CD4-positive, alpha-beta memory T cell (primary cell): ENCODE measurements at regions of chr15 and their contacts with region 1.

Region 1: DNA sequence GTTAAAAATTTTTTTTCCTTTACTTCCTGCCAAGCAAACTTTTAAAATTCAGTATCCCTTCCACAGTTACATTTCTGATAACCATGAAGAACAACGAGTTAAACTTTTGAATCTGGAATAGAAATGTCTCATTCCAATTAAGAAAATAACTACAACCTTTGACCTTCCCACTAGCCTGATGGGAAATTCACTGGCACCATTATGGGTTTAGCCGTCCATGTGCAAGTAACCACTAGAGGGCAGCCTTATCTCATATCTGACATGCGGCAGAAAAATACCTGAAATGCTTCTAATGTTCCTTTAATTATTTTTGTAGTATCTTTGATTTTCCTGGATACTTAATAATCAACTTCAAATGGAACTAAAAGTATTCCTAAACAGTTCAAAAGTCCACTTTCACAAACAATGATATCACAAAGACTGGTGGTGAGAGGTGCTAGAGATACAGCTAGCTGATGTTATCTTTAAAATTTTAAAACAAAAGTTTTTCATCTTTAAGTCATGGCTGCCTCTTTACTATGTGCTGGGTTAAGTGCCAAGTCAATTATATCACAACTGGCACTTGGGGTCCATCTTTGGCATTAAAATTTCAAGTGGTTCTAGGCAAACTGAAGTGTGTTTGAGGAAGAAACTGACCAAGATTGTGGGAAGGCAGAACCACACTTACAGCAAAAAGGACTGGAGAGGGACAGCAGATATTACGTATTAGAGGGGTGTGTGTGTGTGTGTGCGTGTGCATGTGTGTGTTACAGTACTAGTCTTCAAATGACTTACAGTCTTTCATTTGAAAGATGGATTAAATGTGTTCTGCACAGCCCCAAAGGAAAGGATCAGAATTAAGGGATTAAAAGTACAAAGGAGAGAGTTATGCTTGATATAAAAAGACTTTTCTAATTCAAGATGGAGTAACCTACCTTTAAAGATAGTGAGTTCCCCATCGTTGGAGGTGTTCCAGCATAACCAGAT is 107.1 kb upstream of the ICE2 start:
- DNase-seq: peak; percentile 77 to 83 (median 79)
- H3K4me3 ChIP-seq: no peak overlapping the region
- H3K4me3 Mint-ChIP-seq: peak overlapping the region; percentile 69 to 97 (median 82)
- H3K27ac ChIP-seq: peak overlapping the region; percentile 92
- H3K27ac Mint-ChIP-seq: peak overlapping the region; percentile 91 to 98 (median 93)
- H3K4me1 ChIP-seq: peaks cover 91% of the 10 kb centered on the region
- H3K4me1 Mint-ChIP-seq: peaks cover 68 to 92% (median 80%) of the 10 kb centered on the region in 4 donors
- H3K27me3 ChIP-seq: no peaks in the 10 kb centered on the region
- H3K27me3 Mint-ChIP-seq: no peaks in the 10 kb centered on the region

Region 2: GRCh38 chr15:60397772-60398445 is 188.1 kb before region 1 on chr15 and contains the start of gene ANXA2:
- CTCF ChIA-PET with region 1: interaction called, 3 read pairs
- POLR2A ChIA-PET with region 1: interaction called, 3 read pairs
- intact Hi-C with region 1: loop called (anchors 10 kb)
- DNase-seq: peak; percentile 82 to 91 (median 83)
- H3K4me3 ChIP-seq: peak within 1 kb of the TSS; percentile 59 to 86
- H3K4me3 Mint-ChIP-seq: peak within 1 kb of the TSS; percentile 92 to 98 (median 94)
- H3K27ac ChIP-seq: peak within 1 kb of the TSS; percentile 75
- H3K27ac Mint-ChIP-seq: peak within 1 kb of the TSS; percentile 96 to 100 (median 98)
- H3K4me1 ChIP-seq: peaks cover 60% of the 10 kb centered on the region
- H3K4me1 Mint-ChIP-seq: peaks cover 27 to 64% (median 49%) of the 10 kb centered on the region in 4 donors
- H3K27me3 ChIP-seq: no peaks in the 10 kb centered on the region
- H3K27me3 Mint-ChIP-seq: peaks cover 0 to 7% of the 10 kb centered on the region in 2 donors
- total RNA-seq, gene ANXA2: 148 to 160 TPM

Region 3: DNA sequence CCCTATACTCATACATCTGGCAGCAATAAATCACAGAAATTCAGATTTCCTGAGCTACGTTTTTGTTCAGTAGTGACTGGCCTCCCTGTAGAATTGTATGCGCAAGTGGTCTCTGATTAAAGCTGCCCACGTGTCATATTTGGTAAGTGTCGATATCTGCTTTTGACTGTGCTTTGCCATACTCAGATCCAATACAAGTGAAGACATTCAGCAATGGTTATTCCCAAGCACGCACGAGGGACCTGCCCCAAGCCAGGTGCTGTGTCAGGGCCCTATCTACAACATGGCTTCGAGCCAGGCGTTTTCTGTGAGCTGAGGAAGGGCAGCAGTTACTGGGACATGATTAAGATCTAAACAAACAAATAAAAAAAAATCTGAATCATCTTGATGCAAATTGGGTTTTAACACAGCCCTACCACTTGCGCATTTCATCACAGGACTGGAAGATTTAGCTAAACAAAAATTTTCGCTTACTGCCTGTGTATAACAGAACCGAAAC is 59.9 kb before region 1 on chr15:
- CTCF ChIA-PET with region 1: interaction called, 28 read pairs
- POLR2A ChIA-PET with region 1: interaction called, 20 read pairs
- intact Hi-C with region 1: loop called (anchors 5 kb)
- DNase-seq: peak in 4 of 5 donors; percentile 35 to 73 (median 46)
- H3K4me3 ChIP-seq: no peak overlapping the region
- H3K4me3 Mint-ChIP-seq: peak overlapping the region in 7 of 8 donors; percentile 8 to 63 (median 39)
- H3K27ac ChIP-seq: peak overlapping the region; percentile 71
- H3K27ac Mint-ChIP-seq: peak overlapping the region; percentile 88 to 100 (median 97)
- H3K4me1 ChIP-seq: peaks cover 64% of the 10 kb centered on the region
- H3K4me1 Mint-ChIP-seq: peaks cover 61 to 85% (median 72%) of the 10 kb centered on the region in 4 donors
- H3K27me3 ChIP-seq: no peaks in the 10 kb centered on the region
- H3K27me3 Mint-ChIP-seq: no peaks in the 10 kb centered on the region

Region 4: DNA sequence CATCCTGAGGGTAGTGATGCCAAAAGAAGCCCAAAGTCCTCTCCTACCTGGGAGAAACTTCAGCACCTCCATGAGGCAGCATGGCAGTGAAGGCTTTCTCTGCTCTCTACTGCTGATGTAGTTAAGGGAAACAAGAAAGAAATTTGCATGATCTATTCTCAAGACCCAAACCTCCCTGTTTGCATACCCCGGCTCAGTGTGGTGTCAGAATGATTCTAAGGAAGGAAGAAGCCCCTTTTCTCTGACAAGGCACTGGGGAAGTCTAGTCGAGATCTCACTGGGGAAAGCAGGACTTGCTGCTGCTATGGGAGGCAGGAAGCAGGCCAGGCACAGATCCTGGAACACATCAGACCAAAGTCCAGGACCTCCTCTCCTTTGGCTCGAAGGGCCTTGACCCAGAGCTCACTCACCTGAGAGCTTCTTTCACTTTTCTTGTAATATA is 17.7 kb before region 1 on chr15:
- CTCF ChIA-PET with region 1: interaction called, 87 read pairs
- POLR2A ChIA-PET with region 1: interaction called, 628 read pairs
- intact Hi-C with region 1: loop called (anchors 2 kb)
- DNase-seq: peak in 1 of 5 donors; percentile 39
- H3K4me3 ChIP-seq: peak overlapping the region; percentile 2 to 20
- H3K4me3 Mint-ChIP-seq: peak overlapping the region; percentile 8 to 77 (median 70)
- H3K27ac ChIP-seq: peak overlapping the region; percentile 61
- H3K27ac Mint-ChIP-seq: peak overlapping the region; percentile 81 to 97 (median 92)
- H3K4me1 ChIP-seq: peaks cover 99% of the 10 kb centered on the region
- H3K4me1 Mint-ChIP-seq: peaks cover 84 to 98% (median 90%) of the 10 kb centered on the region in 4 donors
- H3K27me3 ChIP-seq: no peaks in the 10 kb centered on the region
- H3K27me3 Mint-ChIP-seq: no peaks in the 10 kb centered on the region

Region 5: GRCh38 chr15:60720493-60721256 is 134.6 kb after region 1 on chr15:
- CTCF ChIA-PET with region 1: interaction called, 3 read pairs
- POLR2A ChIA-PET with region 1: interaction called, 47 read pairs
- intact Hi-C with region 1: loop called (anchors 5 kb)
- DNase-seq: peak; percentile 59 to 77 (median 64)
- H3K4me3 ChIP-seq: peak overlapping the region; percentile 13 to 42
- H3K4me3 Mint-ChIP-seq: peak overlapping the region; percentile 71 to 88 (median 78)
- H3K27ac ChIP-seq: peak overlapping the region; percentile 72
- H3K27ac Mint-ChIP-seq: peak overlapping the region; percentile 83 to 98 (median 94)
- H3K4me1 ChIP-seq: peaks cover 62% of the 10 kb centered on the region
- H3K4me1 Mint-ChIP-seq: peaks cover 51 to 76% (median 57%) of the 10 kb centered on the region in 4 donors
- H3K27me3 ChIP-seq: no peaks in the 10 kb centered on the region
- H3K27me3 Mint-ChIP-seq: no peaks in the 10 kb centered on the region

Region 6: DNA sequence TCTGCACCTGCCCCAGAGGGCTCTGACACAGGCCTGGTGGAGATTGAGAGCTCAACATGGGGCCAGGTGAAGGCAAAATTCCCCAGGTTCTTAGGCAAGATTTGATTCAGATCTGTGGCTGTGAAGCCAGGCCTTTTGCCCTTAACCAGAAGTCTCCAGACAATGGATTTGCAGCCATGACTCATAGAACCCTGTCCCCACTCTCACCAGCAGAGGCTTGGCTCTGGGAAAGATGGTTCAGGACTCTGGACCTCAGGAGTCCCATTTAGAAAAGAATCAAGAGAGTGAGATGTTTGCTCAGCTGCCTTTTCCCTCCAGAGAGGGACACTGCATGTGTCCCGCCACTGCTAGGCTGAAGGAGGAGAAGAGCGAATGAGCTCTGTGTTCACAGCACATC is 254.3 kb after region 1 on chr15:
- CTCF ChIA-PET with region 1: interaction called, 25 read pairs
- POLR2A ChIA-PET with region 1: interaction called, 280 read pairs
- intact Hi-C with region 1: no loop called
- DNase-seq: peak in 1 of 5 donors; percentile 64
- H3K4me3 ChIP-seq: peak overlapping the region; percentile 48 to 60
- H3K4me3 Mint-ChIP-seq: peak overlapping the region; percentile 86 to 93 (median 91)
- H3K27ac ChIP-seq: peak overlapping the region; percentile 66
- H3K27ac Mint-ChIP-seq: peak overlapping the region; percentile 90 to 99 (median 96)
- H3K4me1 ChIP-seq: peaks cover 93% of the 10 kb centered on the region
- H3K4me1 Mint-ChIP-seq: peaks cover 68 to 98% (median 85%) of the 10 kb centered on the region in 4 donors
- H3K27me3 ChIP-seq: no peaks in the 10 kb centered on the region
- H3K27me3 Mint-ChIP-seq: no peaks in the 10 kb centered on the region

Region 7: GRCh38 chr15:60905587-60905986 is 319.6 kb after region 1 on chr15:
- CTCF ChIA-PET with region 1: interaction called, 42 read pairs
- POLR2A ChIA-PET with region 1: interaction called, 9 read pairs
- intact Hi-C with region 1: no loop called
- DNase-seq: peak; percentile 36 to 50 (median 43)
- H3K4me3 ChIP-seq: no peak overlapping the region
- H3K4me3 Mint-ChIP-seq: no peak overlapping the region
- H3K27ac ChIP-seq: no peak overlapping the region
- H3K27ac Mint-ChIP-seq: peak overlapping the region in 1 of 7 donors; percentile 32
- H3K4me1 ChIP-seq: no peaks in the 10 kb centered on the region
- H3K4me1 Mint-ChIP-seq: peaks cover 3 to 20% (median 5%) of the 10 kb centered on the region in 4 donors
- H3K27me3 ChIP-seq: no peaks in the 10 kb centered on the region
- H3K27me3 Mint-ChIP-seq: no peaks in the 10 kb centered on the region

Region 8: DNA sequence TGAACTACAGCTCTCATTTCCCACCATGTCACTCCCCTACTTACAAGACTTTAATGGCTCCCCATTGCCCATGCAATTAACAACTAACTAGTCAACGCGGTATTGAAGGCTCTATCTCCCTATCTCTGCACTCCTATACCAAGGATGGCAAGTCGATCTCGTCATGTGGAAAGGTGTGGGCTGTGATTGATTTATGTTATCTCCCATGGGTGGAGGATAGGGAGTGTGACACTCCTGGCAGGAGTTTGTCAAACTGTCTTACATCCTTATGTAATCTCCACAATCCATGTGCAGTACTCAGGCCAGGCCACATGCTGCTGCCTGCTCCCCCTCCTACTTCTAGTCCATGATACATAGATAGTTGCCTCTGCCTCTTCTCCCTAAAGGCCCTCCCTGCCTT is 646.2 kb after region 1 on chr15:
- CTCF ChIA-PET with region 1: no interaction called
- POLR2A ChIA-PET with region 1: no interaction called
- intact Hi-C with region 1: no loop called
- DNase-seq: no peak
- H3K4me3 ChIP-seq: no peak overlapping the region
- H3K4me3 Mint-ChIP-seq: no peak overlapping the region
- H3K27ac ChIP-seq: no peak overlapping the region
- H3K27ac Mint-ChIP-seq: no peak overlapping the region
- H3K4me1 ChIP-seq: peaks cover 8% of the 10 kb centered on the region
- H3K4me1 Mint-ChIP-seq: peaks cover 0 to 4% (median 3%) of the 10 kb centered on the region in 4 donors
- H3K27me3 ChIP-seq: peaks cover 9% of the 10 kb centered on the region
- H3K27me3 Mint-ChIP-seq: peaks cover 40% of the 10 kb centered on the region in 2 donors